Panc1 (cell line): ENCODE measurements at regions of chr4 and their contacts with region 1.

Region 1: GRCh38 chr4:74133786-74134499 is 24.0 kb upstream of the MTHFD2L start:
- DNase-seq: peak; percentile 61
- ATAC-seq: peak; percentile 86
- H3K4me3 ChIP-seq: no peak overlapping the region
- H3K27ac ChIP-seq: no peak overlapping the region
- H3K4me1 ChIP-seq: no peaks in the 10 kb centered on the region
- H3K27me3 ChIP-seq: no peaks in the 10 kb centered on the region
- CTCF ChIP-seq: peak; percentile 73

Region 2: GRCh38 chr4:73341454-73341853 is 792.5 kb before region 1 on chr4:
- CTCF ChIA-PET with region 1: interaction called, 4 read pairs
- POLR2A ChIA-PET with region 1: no interaction called
- in situ Hi-C with region 1: no loop called
- intact Hi-C with region 1: loop called (anchors 10 kb)
- DNase-seq: peak; percentile 35
- ATAC-seq: peak; percentile 79; the same call in 1 of the 2 replicates
- H3K4me3 ChIP-seq: no peak overlapping the region
- H3K27ac ChIP-seq: no peak overlapping the region
- H3K4me1 ChIP-seq: no peaks in the 10 kb centered on the region
- H3K27me3 ChIP-seq: no peaks in the 10 kb centered on the region
- CTCF ChIP-seq: peak; percentile 64

Region 3: GRCh38 chr4:73593631-73594241 is 540.2 kb before region 1 on chr4:
- CTCF ChIA-PET with region 1: no interaction called
- POLR2A ChIA-PET with region 1: no interaction called
- in situ Hi-C with region 1: no loop called
- intact Hi-C with region 1: loop called (anchors 10 kb)
- DNase-seq: no peak
- ATAC-seq: no peak
- H3K4me3 ChIP-seq: no peak overlapping the region
- H3K27ac ChIP-seq: no peak overlapping the region
- H3K4me1 ChIP-seq: no peaks in the 10 kb centered on the region
- H3K27me3 ChIP-seq: no peaks in the 10 kb centered on the region
- CTCF ChIP-seq: peak; percentile 64; the same call in 1 of the 2 replicates

Region 4: GRCh38 chr4:73662709-73663546 is 471.0 kb before region 1 on chr4:
- CTCF ChIA-PET with region 1: no interaction called
- POLR2A ChIA-PET with region 1: no interaction called
- in situ Hi-C with region 1: no loop called
- intact Hi-C with region 1: loop called (anchors 5 kb)
- DNase-seq: no peak
- ATAC-seq: peak; percentile 79
- H3K4me3 ChIP-seq: no peak overlapping the region
- H3K27ac ChIP-seq: peak overlapping the region; percentile 63; the same call in 1 of the 2 replicates
- H3K4me1 ChIP-seq: no peaks in the 10 kb centered on the region
- H3K27me3 ChIP-seq: no peaks in the 10 kb centered on the region
- CTCF ChIP-seq: peak; percentile 55

Region 5: GRCh38 chr4:73869130-73870050 is 264.6 kb before region 1 on chr4 and contains the start of gene CXCL1:
- CTCF ChIA-PET with region 1: no interaction called
- POLR2A ChIA-PET with region 1: no interaction called
- in situ Hi-C with region 1: no loop called
- intact Hi-C with region 1: loop called (anchors 2 kb)
- DNase-seq: no peak
- ATAC-seq: peak; percentile 76
- H3K4me3 ChIP-seq: peak within 1 kb of the TSS; percentile 54 to 79
- H3K27ac ChIP-seq: peak within 1 kb of the TSS; percentile 64
- H3K4me1 ChIP-seq: peaks cover 5% of the 10 kb centered on the region
- H3K27me3 ChIP-seq: no peaks in the 10 kb centered on the region
- CTCF ChIP-seq: no peak; the same call in 1 of the 2 replicates
- total RNA-seq, gene CXCL1: 12.8 TPM